HepG2 (cell line): ENCODE measurements at regions of chr5 and their contacts with region 1.

Region 1: GRCh38 chr5:60395712-60396329 is 304.1 kb downstream of the DEPDC1B start:
- DNase-seq: no peak
- ATAC-seq: peak; percentile 50
- H3K4me3 ChIP-seq: no peak overlapping the region
- H3K27ac ChIP-seq: no peak overlapping the region
- H3K4me1 ChIP-seq: peaks cover 12% of the 10 kb centered on the region
- H3K27me3 ChIP-seq: no peaks in the 10 kb centered on the region
- CTCF ChIP-seq: no peak
- EP300 ChIP-seq: no peak
- POLR2A ChIP-seq: no peak
- RAD21 ChIP-seq: no peak

Region 2: GRCh38 chr5:60372786-60373185 is 23.0 kb before region 1 on chr5:
- CTCF ChIA-PET with region 1: no interaction called
- POLR2A ChIA-PET with region 1: no interaction called
- in situ Hi-C with region 1: no loop called
- intact Hi-C with region 1: loop called (anchors 2 kb)
- DNase-seq: peak; percentile 33
- ATAC-seq: peak; percentile 31; the same call in 1 of the 3 replicates
- H3K4me3 ChIP-seq: no peak overlapping the region
- H3K27ac ChIP-seq: no peak overlapping the region
- H3K4me1 ChIP-seq: peaks cover 53% of the 10 kb centered on the region
- H3K27me3 ChIP-seq: no peaks in the 10 kb centered on the region
- CTCF ChIP-seq: no peak
- EP300 ChIP-seq: no peak
- POLR2A ChIP-seq: no peak
- RAD21 ChIP-seq: no peak

Region 3: GRCh38 chr5:60494635-60495034 is 98.8 kb after region 1 on chr5:
- CTCF ChIA-PET with region 1: no interaction called
- POLR2A ChIA-PET with region 1: no interaction called
- in situ Hi-C with region 1: no loop called
- intact Hi-C with region 1: no loop called
- DNase-seq: no peak
- ATAC-seq: no peak
- H3K4me3 ChIP-seq: no peak overlapping the region
- H3K27ac ChIP-seq: peak overlapping the region; percentile 44
- H3K4me1 ChIP-seq: peaks cover 95% of the 10 kb centered on the region
- H3K27me3 ChIP-seq: no peaks in the 10 kb centered on the region
- CTCF ChIP-seq: no peak
- EP300 ChIP-seq: no peak
- POLR2A ChIP-seq: no peak
- RAD21 ChIP-seq: no peak